OCI-LY7 (cell line): ENCODE measurements at regions of chr1 and their contacts with region 1.

Region 1: DNA sequence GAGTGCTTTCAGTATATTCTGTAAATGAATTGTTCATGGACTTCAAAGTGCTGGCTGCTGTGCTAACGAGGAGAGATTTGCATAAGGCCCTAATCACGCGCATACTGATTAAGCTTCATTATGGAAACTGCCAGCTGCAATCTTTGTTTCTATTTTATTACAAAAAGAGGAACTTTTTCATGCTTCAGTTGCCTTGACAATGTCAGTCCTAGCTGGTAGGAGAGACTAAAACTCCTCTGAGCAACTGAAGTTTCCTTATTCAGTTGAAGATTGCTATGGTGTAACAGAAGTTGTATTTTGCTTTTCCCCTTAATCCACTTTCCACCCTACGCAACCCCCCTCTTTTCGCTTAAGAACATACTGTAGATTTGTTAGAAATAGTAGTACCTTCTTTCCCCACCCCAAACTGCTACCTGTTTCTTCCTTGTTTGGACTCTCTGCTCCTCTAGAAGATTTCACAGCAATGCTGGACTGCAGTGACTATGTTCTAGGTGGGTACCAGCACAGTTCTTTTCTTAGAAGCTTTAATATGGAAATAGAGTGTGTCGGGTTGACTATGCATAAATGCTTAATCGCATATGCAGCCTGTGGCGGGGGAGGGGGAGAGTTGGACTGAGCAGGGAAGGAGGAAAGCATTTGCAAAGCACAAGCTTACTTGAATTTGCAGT is 108.3 kb downstream of the POU2F1 start:
- DNase-seq: peak; percentile 98
- H3K4me3 ChIP-seq: peak overlapping the region; percentile 79
- H3K27ac ChIP-seq: peak overlapping the region; percentile 99
- H3K4me1 ChIP-seq: peaks cover 42% of the 10 kb centered on the region
- CTCF ChIP-seq: no peak

Region 2: DNA sequence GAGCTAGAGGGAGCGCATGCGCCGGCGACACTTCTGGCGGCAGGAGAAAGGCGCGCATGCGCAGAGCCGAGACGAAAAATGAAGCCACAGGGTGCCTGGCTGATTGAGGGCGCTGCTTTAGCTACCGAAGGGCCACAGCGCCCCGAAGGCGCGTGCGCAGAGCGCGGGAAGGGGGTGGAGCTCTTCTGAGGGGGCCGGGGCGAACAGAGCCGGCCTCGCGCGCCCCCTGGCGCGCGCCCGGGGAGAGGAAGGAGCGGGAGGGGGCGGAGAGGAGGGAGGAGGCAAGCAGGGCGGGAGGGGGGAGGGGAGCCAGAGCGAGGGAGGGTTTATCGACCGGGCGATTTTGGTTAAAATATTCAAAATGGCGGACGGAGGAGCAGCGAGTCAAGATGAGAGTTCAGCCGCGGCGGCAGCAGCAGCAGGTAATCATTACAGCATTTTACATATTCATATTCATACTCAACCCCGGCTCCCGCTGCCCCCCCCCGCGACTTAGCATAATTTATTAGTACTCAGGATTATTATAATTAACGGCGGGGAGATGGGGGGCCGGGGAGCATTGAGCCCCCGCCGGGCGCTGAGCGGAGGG is 108.3 kb before region 1 on chr1 and contains the start of gene POU2F1:
- CTCF ChIA-PET with region 1: no interaction called
- POLR2A ChIA-PET with region 1: interaction called, 4 read pairs
- intact Hi-C with region 1: loop called (anchors 1 kb)
- DNase-seq: peak; percentile 98
- H3K4me3 ChIP-seq: peak within 1 kb of the TSS; percentile 82
- H3K27ac ChIP-seq: peak within 1 kb of the TSS; percentile 94
- H3K4me1 ChIP-seq: peaks cover 29% of the 10 kb centered on the region
- CTCF ChIP-seq: peak; percentile 79
- total RNA-seq, gene POU2F1: 18.7 and 21.2 TPM in 2 replicates

Region 3: DNA sequence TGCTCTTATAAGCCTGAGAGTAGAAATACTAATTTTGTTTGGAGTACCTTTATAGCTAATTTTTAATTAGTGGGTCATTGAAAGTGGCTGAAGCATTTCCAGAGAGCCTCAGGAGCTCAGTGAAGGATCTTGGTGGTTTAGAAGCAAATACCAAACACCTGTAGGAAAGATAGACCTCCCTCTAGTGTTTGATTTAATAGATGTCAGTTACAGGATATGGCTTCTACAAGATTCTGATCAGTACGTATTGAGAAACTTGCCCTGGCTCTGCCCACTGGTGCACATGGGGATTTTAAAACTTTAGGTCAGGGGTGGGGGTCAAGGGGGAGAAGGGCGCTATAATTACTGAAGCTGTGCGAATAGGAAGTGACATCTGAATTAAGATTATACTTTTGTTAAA is 13.9 kb after region 1 on chr1:
- CTCF ChIA-PET with region 1: interaction called, 3 read pairs
- POLR2A ChIA-PET with region 1: interaction called, 10 read pairs
- intact Hi-C with region 1: no loop called
- DNase-seq: peak; percentile 59
- H3K4me3 ChIP-seq: no peak overlapping the region
- H3K27ac ChIP-seq: no peak overlapping the region
- H3K4me1 ChIP-seq: peaks cover 18% of the 10 kb centered on the region
- CTCF ChIP-seq: peak; percentile 80

Region 4: GRCh38 chr1:167362638-167363037 is 33.7 kb after region 1 on chr1:
- CTCF ChIA-PET with region 1: no interaction called
- POLR2A ChIA-PET with region 1: interaction called, 19 read pairs
- intact Hi-C with region 1: loop called (anchors 1 kb)
- DNase-seq: peak; percentile 39
- H3K4me3 ChIP-seq: peak overlapping the region; percentile 61
- H3K27ac ChIP-seq: peak overlapping the region; percentile 100
- H3K4me1 ChIP-seq: peaks cover 70% of the 10 kb centered on the region
- CTCF ChIP-seq: no peak

Region 5: GRCh38 chr1:167627865-167628641 is 299.1 kb after region 1 on chr1:
- CTCF ChIA-PET with region 1: no interaction called
- POLR2A ChIA-PET with region 1: interaction called, 10 read pairs
- intact Hi-C with region 1: loop called (anchors 5 kb)
- DNase-seq: peak; percentile 96
- H3K4me3 ChIP-seq: peak overlapping the region; percentile 93
- H3K27ac ChIP-seq: peak overlapping the region; percentile 99
- H3K4me1 ChIP-seq: peaks cover 82% of the 10 kb centered on the region
- CTCF ChIP-seq: no peak

Region 6: DNA sequence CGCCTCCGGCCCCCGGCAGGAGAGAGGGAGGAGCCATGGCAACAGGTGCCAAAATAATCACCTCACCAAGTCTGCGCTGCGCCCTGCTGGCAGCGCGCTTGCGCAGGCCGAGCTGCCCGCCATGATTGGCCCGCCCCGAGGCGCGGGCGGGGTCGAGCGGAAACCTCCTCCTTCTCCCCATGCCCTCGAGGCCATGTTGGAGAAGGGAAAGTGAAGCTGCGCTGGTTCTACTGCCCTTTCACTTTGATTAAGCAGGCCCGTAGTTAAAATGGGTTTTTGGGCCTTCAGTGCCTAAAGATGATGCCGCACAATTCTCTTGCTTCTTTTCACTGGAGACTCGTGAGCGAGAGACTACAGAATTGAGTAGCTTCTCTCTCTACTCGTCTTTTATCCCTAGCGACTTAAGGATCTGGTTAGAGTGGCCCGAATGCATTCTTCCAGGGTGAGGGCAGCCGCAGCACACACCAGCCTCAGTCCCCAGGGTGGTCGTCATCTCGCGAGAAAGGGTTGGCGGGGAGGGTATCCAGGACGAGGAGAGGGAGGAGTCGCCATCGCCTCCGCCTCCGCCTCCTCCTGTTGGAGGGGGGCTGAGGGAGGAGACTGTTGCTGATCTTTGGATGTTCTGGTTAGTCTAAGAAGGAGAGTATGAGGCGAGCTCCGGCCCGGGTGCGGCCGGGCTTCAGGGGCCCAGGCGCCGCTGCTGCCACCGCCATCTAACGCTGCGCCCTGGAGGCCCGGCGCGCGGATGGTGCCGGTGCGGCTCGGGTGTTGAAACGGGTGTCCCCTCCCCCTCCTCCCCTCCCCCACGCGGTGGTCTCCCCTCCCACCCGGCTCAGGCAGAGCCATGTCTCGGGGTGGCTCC is 607.3 kb after region 1 on chr1 and contains the start of gene DCAF6:
- CTCF ChIA-PET with region 1: no interaction called
- POLR2A ChIA-PET with region 1: interaction called, 3 read pairs
- intact Hi-C with region 1: loop called (anchors 5 kb)
- DNase-seq: peak; percentile 99
- H3K4me3 ChIP-seq: peak within 1 kb of the TSS; percentile 90
- H3K27ac ChIP-seq: peak within 1 kb of the TSS; percentile 89
- H3K4me1 ChIP-seq: peaks cover 22% of the 10 kb centered on the region
- CTCF ChIP-seq: no peak
- total RNA-seq, gene DCAF6: 23.2 and 25.4 TPM in 2 replicates